Activated CD4-positive, alpha-beta memory T cell treated with anti-CD3 and anti-CD28 coated beads for 36 hours (primary cell): ENCODE measurements at regions of chr9 and their contacts with region 1.

Region 1: DNA sequence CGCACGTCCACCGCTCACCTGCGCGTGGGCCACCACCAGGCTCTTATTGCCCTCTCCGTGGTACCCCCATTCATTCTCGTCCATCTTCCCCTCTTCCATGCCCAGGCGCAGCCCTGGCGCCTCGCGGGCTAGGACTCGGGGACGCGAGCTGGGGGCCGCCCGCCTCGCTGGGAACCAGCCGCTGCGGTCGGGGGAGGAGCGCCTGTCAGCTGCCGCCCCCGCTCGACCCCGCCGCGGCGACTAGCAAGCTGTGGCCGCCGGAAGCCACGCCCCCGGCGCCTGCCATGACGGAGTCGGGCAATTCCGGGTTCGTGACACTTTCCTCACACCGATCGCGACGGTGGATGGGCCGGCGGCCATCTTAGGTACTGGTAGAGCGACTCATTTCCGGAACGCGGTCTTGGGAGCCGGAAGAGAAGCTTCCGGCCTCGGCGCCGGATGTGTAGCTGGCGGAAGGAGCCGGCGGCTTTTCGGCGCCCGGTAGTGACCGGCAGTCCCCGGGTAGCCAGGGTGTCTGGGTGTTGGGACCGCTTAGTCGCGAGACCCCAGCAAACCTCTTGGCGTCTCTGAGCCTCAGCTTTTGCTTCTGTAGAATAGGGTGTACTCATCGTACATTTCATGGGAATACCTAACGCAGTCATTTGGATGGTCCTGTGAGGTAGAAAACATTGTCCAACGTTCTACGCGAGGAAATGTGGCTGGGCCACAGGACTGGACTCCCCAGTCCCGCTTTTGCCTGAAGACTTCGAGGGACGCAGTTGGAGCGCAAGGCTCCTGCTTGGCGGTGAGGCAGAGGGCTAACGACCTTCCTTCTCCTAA is at the start of gene IPPK:
- DNase-seq: peak; percentile 99
- H3K4me3 Mint-ChIP-seq: peak within 1 kb of the TSS; percentile 95
- H3K27ac Mint-ChIP-seq: peak within 1 kb of the TSS; percentile 85
- H3K4me1 Mint-ChIP-seq: peaks cover 35% of the 10 kb centered on the region
- H3K27me3 Mint-ChIP-seq: no peaks in the 10 kb centered on the region
- total RNA-seq, gene IPPK: 10.8 to 11.0 TPM

Region 2: GRCh38 chr9:92115071-92115858 is 554.8 kb before region 1 on chr9 and contains the start of gene SPTLC1:
- CTCF ChIA-PET with region 1: no interaction called
- POLR2A ChIA-PET with region 1: no interaction called
- intact Hi-C with region 1: loop called (anchors 1 kb)
- DNase-seq: peak; percentile 97
- H3K4me3 Mint-ChIP-seq: peak within 1 kb of the TSS; percentile 97
- H3K27ac Mint-ChIP-seq: peak within 1 kb of the TSS; percentile 94
- H3K4me1 Mint-ChIP-seq: peaks cover 22% of the 10 kb centered on the region
- H3K27me3 Mint-ChIP-seq: no peaks in the 10 kb centered on the region
- total RNA-seq, gene SPTLC1: 39.9 to 41.2 TPM

Region 3: DNA sequence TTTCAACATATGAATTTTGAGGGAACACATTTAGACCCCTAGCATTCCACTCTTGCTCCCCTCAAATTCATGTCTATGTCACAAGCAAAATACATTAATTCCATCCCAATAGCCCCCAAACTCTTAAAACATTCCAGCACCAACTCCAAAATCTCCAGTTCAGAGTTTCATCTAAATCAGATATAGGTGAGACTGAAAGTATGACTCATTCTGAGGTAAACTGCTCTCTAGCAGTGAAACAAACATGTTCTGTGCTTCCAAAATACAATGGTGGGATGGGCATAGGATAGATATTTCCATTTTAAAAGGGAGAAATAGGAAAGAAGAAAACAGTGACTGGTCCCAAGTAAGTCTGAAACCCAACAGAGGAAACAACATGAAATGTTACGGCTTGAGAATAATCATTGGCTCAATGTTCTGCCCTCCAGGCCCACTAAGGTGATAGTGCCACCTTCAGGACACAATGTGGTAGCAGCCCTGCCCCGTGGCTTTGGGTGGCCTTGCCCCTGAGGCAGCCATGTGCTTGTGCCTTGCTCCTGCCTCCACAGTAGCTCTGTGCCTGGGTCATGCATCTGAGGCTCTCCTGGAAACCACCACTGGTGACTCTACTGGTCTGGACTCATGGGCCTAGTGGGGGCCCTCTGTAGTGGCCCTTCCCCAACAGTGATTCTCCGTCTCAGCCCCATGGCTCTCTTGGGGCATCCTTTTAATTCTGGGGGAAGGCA is 36.3 kb after region 1 on chr9:
- CTCF ChIA-PET with region 1: interaction called, 4 read pairs
- POLR2A ChIA-PET with region 1: no interaction called
- intact Hi-C with region 1: loop called (anchors 5 kb)
- DNase-seq: peak; percentile 68
- H3K4me3 Mint-ChIP-seq: no peak overlapping the region
- H3K27ac Mint-ChIP-seq: no peak overlapping the region
- H3K4me1 Mint-ChIP-seq: peaks cover 20% of the 10 kb centered on the region
- H3K27me3 Mint-ChIP-seq: no peaks in the 10 kb centered on the region

Region 4: GRCh38 chr9:92790542-92791527 is 120.7 kb after region 1 on chr9:
- CTCF ChIA-PET with region 1: interaction called, 10 read pairs
- POLR2A ChIA-PET with region 1: no interaction called
- intact Hi-C with region 1: loop called (anchors 2 kb)
- DNase-seq: peak; percentile 78
- H3K4me3 Mint-ChIP-seq: peak overlapping the region; percentile 6
- H3K27ac Mint-ChIP-seq: peak overlapping the region; percentile 39
- H3K4me1 Mint-ChIP-seq: peaks cover 12% of the 10 kb centered on the region
- H3K27me3 Mint-ChIP-seq: no peaks in the 10 kb centered on the region

Region 5: DNA sequence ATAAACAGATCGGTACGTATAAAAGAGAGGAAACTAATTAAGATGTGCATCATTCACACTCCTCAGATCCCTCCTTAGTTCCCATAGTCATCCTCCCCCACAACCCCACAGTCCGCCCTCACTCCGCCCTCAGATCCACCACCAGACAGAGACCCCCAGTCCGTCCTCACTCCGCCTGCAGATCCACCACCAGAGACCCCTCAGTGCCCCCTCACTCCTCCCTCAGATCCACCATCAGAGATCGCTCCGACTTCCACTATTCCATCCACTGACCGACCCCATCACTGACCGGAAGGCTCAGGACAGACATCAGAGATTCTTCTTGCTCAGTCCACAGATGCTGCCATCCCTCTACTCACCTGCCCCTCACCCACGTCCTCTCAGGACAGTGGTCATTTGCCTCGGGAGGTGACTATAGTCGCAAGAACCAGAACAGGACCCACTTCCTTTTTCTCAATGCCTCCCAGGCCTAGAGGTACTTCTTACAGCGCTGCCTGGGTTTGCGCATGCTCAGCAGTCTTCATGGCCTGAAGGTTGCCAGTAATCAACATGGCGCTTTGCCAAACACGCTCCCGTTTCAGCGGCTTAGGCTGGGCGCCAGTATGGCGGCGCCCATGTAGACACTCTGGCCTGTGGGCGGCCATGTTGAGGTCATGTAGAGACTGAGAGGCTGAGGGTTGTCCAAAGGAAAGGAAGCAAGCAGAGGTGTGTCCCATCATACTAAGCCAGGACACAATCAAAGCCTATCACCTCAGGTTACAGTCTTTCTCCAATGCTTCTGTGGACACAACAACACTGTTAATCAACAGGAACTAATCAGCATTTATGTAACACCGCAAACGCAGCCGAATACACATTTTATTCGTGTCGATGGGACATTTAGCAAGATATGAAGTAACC is 207.7 kb after region 1 on chr9 and contains the start of gene ZNF484:
- CTCF ChIA-PET with region 1: no interaction called
- POLR2A ChIA-PET with region 1: no interaction called
- intact Hi-C with region 1: loop called (anchors 1 kb)
- DNase-seq: peak; percentile 98
- H3K4me3 Mint-ChIP-seq: peak within 1 kb of the TSS; percentile 97
- H3K27ac Mint-ChIP-seq: peak within 1 kb of the TSS; percentile 97
- H3K4me1 Mint-ChIP-seq: peaks cover 41% of the 10 kb centered on the region
- H3K27me3 Mint-ChIP-seq: no peaks in the 10 kb centered on the region
- total RNA-seq, gene ZNF484: 7.4 to 7.5 TPM